ENCODE measurements at regions of chr9 and their contacts with region 1.

Region 1: GRCh38 chr9:133994353-133995011 is 2.4 kb upstream of the VAV2 start:
- DNase-seq: peak; percentile 86
- ATAC-seq: peak; percentile 77

Region 2: DNA sequence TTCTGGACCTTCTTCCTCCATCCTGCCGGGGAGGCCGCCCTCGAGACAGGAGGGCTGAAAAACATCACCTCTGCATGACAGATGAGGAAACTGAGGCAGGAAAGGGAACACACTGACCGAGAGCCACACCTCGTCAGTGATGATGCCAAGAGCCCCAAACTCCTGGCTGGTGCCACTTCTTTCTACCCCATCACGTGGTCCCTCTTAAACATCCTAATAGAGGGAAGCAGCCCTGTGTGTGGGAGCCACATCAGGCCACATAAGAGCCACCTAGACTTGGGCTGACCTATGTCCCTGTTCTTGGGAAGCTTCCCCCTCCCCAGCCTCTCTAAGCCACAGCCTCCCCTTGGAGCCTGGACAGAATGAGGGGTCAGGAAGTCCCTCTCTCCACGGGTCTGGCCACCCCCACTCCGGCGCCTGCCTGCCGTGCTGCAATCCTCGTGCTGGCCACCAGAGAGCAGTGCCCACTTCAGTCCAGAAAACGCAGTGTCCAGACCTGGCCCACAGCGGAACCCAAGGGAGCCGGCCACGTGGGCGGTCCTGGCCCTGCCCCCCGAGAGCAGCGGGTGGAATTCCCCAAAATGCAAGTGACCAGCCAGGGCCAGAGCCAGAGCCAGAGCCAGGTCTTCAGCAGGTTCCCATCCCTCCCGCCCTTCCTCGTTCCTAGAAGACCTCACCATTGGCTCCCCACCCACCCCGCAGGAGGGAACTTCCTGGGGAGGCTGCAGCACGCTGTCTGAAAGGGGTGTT is 201.6 kb before region 1 on chr9:
- intact Hi-C with region 1: loop called (anchors 2 kb)
- DNase-seq: peak; percentile 87
- ATAC-seq: peak; percentile 89